OCI-LY7 (cell line): ENCODE measurements at regions of chr4 and their contacts with region 1.

Region 1: GRCh38 chr4:37802068-37802666 is 24.3 kb upstream of the PGM2 start:
- DNase-seq: peak; percentile 61
- H3K4me3 ChIP-seq: no peak overlapping the region
- H3K27ac ChIP-seq: no peak overlapping the region
- H3K4me1 ChIP-seq: peaks cover 24% of the 10 kb centered on the region
- CTCF ChIP-seq: peak; percentile 73

Region 2: DNA sequence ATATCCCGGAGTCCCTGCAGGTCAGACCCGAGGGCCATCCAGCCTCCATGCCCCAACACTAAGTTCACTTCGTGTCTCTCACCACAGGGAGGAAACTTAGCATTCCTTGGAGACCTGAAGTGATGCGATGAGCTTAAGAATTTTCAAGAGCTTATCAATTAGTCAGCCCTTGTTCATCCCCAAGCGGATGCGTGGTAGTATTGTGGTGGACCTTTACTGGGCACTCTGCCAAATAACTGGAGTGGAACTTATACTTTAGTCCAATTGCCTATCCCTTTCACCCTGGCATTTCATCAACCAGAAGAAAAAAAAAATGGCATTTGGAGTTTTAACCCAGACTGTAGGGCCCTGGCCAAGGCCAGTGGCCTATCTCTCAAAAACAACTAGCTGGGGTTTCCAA is 253.1 kb before region 1 on chr4:
- CTCF ChIA-PET with region 1: no interaction called
- POLR2A ChIA-PET with region 1: no interaction called
- intact Hi-C with region 1: no loop called
- DNase-seq: no peak
- H3K4me3 ChIP-seq: no peak overlapping the region
- H3K27ac ChIP-seq: no peak overlapping the region
- H3K4me1 ChIP-seq: no peaks in the 10 kb centered on the region
- CTCF ChIP-seq: no peak

Region 3: GRCh38 chr4:37603070-37603468 is 199.1 kb before region 1 on chr4:
- CTCF ChIA-PET with region 1: interaction called, 5 read pairs
- POLR2A ChIA-PET with region 1: no interaction called
- intact Hi-C with region 1: loop called (anchors 1 kb)
- DNase-seq: peak; percentile 60
- H3K4me3 ChIP-seq: no peak overlapping the region
- H3K27ac ChIP-seq: no peak overlapping the region
- H3K4me1 ChIP-seq: no peaks in the 10 kb centered on the region
- CTCF ChIP-seq: peak; percentile 99

Region 4: GRCh38 chr4:37826295-37827029 is 24.3 kb after region 1 on chr4 and contains the start of gene PGM2:
- CTCF ChIA-PET with region 1: no interaction called
- POLR2A ChIA-PET with region 1: interaction called, 21 read pairs
- intact Hi-C with region 1: loop called (anchors 1 kb)
- DNase-seq: peak; percentile 92
- H3K4me3 ChIP-seq: peak within 1 kb of the TSS; percentile 91
- H3K27ac ChIP-seq: peak within 1 kb of the TSS; percentile 60
- H3K4me1 ChIP-seq: peaks cover 30% of the 10 kb centered on the region
- CTCF ChIP-seq: 0 out of 2 replicates have a peak, but pooled peaks have one; percentile 21
- total RNA-seq, gene PGM2: 52.7 and 67.4 TPM in 2 replicates

Region 5: GRCh38 chr4:37836838-37837440 is 34.8 kb after region 1 on chr4:
- CTCF ChIA-PET with region 1: no interaction called
- POLR2A ChIA-PET with region 1: no interaction called
- intact Hi-C with region 1: no loop called
- DNase-seq: no peak
- H3K4me3 ChIP-seq: peak overlapping the region; percentile 7
- H3K27ac ChIP-seq: peak overlapping the region; percentile 46
- H3K4me1 ChIP-seq: peaks cover 22% of the 10 kb centered on the region
- CTCF ChIP-seq: no peak

Region 6: GRCh38 chr4:37847311-37847884 is 45.2 kb after region 1 on chr4:
- CTCF ChIA-PET with region 1: interaction called, 4 read pairs
- POLR2A ChIA-PET with region 1: interaction called, 4 read pairs
- intact Hi-C with region 1: loop called (anchors 2 kb)
- DNase-seq: no peak
- H3K4me3 ChIP-seq: peak overlapping the region; percentile 36
- H3K27ac ChIP-seq: peak overlapping the region; percentile 93
- H3K4me1 ChIP-seq: peaks cover 76% of the 10 kb centered on the region
- CTCF ChIP-seq: no peak

Region 7: GRCh38 chr4:38034986-38035882 is 233.1 kb after region 1 on chr4:
- CTCF ChIA-PET with region 1: interaction called, 3 read pairs
- POLR2A ChIA-PET with region 1: interaction called, 3 read pairs
- intact Hi-C with region 1: loop called (anchors 1 kb)
- DNase-seq: peak; percentile 84
- H3K4me3 ChIP-seq: no peak overlapping the region
- H3K27ac ChIP-seq: peak overlapping the region; percentile 19
- H3K4me1 ChIP-seq: peaks cover 14% of the 10 kb centered on the region
- CTCF ChIP-seq: peak; percentile 97

Region 8: DNA sequence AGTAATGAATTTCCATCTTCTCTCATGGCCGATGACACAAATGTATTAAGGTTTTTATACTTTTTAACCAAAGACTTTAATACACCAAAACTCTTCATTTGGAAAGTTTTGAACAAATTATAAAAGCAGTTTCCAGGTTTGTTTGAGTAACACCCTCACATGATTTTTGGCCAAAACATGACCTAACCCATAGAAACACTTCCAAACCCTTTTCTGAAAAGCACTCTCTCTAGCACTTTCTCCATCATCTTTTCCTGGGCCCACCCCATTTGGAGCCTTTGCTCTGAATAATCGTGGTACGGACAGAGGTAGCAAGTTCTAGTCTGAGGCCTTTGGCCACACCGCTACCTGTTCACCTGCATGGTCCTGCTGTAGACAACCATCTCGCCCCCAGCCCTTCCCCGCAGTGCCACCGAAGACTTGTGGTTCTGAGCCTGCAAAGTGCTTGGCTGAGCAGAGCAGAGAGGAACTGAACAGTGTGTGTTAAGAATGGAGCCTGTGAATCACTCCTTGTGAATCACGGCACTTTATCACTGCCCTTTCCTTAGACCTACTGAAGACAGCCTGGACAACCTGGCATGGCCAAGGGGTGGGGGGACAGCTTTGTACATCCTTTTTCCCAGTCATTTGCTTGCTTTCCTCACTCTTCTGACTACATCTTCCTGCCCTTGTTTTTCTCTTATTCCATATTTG is 339.8 kb after region 1 on chr4:
- CTCF ChIA-PET with region 1: no interaction called
- POLR2A ChIA-PET with region 1: no interaction called
- intact Hi-C with region 1: loop called (anchors 10 kb)
- DNase-seq: no peak
- H3K4me3 ChIP-seq: no peak overlapping the region
- H3K27ac ChIP-seq: no peak overlapping the region
- H3K4me1 ChIP-seq: no peaks in the 10 kb centered on the region
- CTCF ChIP-seq: no peak

Region 9: DNA sequence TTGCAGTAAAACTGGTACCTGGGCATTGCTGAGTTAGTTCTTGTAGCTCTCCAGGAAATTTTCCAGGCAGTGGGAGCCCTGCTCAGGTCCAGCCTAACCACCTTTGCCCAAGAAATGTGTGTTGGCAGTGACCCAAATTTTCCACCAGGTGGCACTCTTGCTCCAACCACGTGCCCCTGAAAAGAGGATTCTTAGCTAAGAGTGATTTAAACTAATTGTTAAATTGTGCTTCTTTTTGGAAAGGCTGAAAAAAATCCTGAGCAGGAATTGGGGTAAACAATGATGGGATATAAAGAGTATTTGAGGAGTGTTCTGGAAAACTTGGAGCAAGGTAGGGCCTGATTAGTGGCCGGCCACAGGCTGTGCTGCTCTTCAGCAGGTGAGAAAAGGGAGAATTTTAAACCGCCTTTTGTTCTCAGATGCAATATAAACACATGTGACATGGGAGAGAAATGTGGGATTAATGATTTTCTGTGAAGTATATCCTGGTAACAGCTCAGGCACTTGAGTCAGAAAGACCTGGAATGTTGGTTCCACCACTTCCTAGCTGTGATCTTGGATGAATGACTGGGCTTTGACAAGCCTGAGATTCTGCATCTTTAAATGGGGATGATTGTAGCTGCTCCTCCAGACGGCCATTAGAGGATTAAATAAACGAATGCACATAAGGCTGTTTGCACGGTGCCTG is 377.7 kb after region 1 on chr4:
- CTCF ChIA-PET with region 1: no interaction called
- POLR2A ChIA-PET with region 1: no interaction called
- intact Hi-C with region 1: loop called (anchors 10 kb)
- DNase-seq: peak; percentile 60
- H3K4me3 ChIP-seq: no peak overlapping the region
- H3K27ac ChIP-seq: no peak overlapping the region
- H3K4me1 ChIP-seq: no peaks in the 10 kb centered on the region
- CTCF ChIP-seq: peak; percentile 98